SK-N-SH (cell line): ENCODE measurements at regions of chr9 and their contacts with region 1.

Region 1: GRCh38 chr9:126558051-126558665 is 55.6 kb upstream of the LMX1B start:
- DNase-seq: peak; percentile 83
- H3K4me3 ChIP-seq: no peak overlapping the region; a peak in 1 of 4 replicates
- H3K27ac ChIP-seq: no peak overlapping the region
- H3K4me1 ChIP-seq: peaks cover 0 to 10% of the 10 kb centered on the region in 2 experiments; a peak in 1 of 4 replicates
- H3K27me3 ChIP-seq: peaks cover 27% of the 10 kb centered on the region
- CTCF ChIP-seq: peak; percentile 87
- EP300 ChIP-seq: no peak
- RAD21 ChIP-seq: peak; percentile 94

Region 2: DNA sequence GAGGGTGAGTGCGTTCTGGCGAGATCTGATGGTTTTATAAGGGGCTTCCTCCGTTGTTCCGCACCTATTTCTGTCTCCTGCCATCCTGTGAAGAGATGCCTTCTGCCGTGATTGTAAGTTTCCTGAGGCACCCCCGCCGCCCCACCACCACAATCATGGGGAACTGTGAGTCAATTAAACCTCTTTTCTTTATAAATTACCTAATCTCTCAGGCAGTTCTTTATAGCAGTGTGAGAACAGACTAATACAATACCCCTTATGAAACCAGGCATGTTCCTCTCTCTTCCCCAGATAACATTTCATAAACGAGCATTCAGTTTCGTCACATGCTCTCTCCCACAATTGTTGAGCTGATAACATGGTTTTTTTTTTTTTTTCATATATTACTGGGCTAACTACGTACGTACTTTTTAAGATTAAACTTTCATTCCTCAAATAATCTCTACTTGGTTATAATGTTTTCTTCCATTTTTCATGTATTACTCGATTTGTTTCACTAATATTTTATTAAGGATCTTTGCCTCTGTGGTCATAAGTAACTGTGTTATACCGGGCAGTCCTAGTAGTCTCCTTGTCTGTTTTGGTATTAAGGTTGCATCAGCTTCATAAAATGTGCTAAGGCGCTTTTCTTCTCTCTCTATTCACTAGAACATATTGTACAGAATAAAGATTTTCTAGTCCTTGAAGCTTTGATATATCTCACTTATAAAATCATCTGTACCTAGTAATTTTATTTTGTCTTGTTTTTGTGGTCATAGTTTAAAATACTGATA is 296.4 kb before region 1 on chr9:
- CTCF ChIA-PET with region 1: no interaction called
- POLR2A ChIA-PET with region 1: no interaction called
- DNase-seq: no peak
- H3K4me3 ChIP-seq: no peak overlapping the region
- H3K27ac ChIP-seq: no peak overlapping the region
- H3K4me1 ChIP-seq: no peaks in the 10 kb centered on the region
- H3K27me3 ChIP-seq: peaks cover 20% of the 10 kb centered on the region
- CTCF ChIP-seq: no peak
- EP300 ChIP-seq: no peak
- RAD21 ChIP-seq: no peak

Region 3: GRCh38 chr9:126514047-126514821 is 43.9 kb before region 1 on chr9:
- CTCF ChIA-PET with region 1: interaction called, 473 read pairs
- POLR2A ChIA-PET with region 1: interaction called, 4 read pairs
- DNase-seq: peak; percentile 92
- H3K4me3 ChIP-seq: no peak overlapping the region
- H3K27ac ChIP-seq: peak overlapping the region in 1 of 2 experiments; percentile 54; a peak in 1 of 4 replicates
- H3K4me1 ChIP-seq: peaks cover 0 to 54% of the 10 kb centered on the region in 2 experiments; a peak in 2 of 4 replicates
- H3K27me3 ChIP-seq: no peaks in the 10 kb centered on the region
- CTCF ChIP-seq: peak; percentile 40
- EP300 ChIP-seq: no peak
- RAD21 ChIP-seq: peak; percentile 46

Region 4: GRCh38 chr9:126581893-126582292 is 23.7 kb after region 1 on chr9:
- CTCF ChIA-PET with region 1: interaction called, 14 read pairs
- POLR2A ChIA-PET with region 1: no interaction called
- DNase-seq: peak; percentile 56
- H3K4me3 ChIP-seq: no peak overlapping the region
- H3K27ac ChIP-seq: no peak overlapping the region
- H3K4me1 ChIP-seq: peaks cover 0 to 2% of the 10 kb centered on the region in 2 experiments; a peak in 1 of 4 replicates
- H3K27me3 ChIP-seq: peaks cover 38% of the 10 kb centered on the region; the same call in 1 of the 2 replicates
- CTCF ChIP-seq: no peak
- EP300 ChIP-seq: no peak
- RAD21 ChIP-seq: no peak